PC-9 (cell line): ENCODE measurements at regions of chr11 and their contacts with region 1.

Region 1: GRCh38 chr11:57741132-57742086 is at the start of gene SELENOH:
- DNase-seq: peak; percentile 92 to 99
- H3K4me3 ChIP-seq: peak within 1 kb of the TSS; percentile 67
- H3K27ac ChIP-seq: peak within 1 kb of the TSS; percentile 64
- H3K4me1 ChIP-seq: peaks cover 14% of the 10 kb centered on the region
- H3K27me3 ChIP-seq: no peaks in the 10 kb centered on the region
- CTCF ChIP-seq: no peak
- total RNA-seq, gene SELENOH: 211 and 318 TPM in 2 replicates

Region 2: DNA sequence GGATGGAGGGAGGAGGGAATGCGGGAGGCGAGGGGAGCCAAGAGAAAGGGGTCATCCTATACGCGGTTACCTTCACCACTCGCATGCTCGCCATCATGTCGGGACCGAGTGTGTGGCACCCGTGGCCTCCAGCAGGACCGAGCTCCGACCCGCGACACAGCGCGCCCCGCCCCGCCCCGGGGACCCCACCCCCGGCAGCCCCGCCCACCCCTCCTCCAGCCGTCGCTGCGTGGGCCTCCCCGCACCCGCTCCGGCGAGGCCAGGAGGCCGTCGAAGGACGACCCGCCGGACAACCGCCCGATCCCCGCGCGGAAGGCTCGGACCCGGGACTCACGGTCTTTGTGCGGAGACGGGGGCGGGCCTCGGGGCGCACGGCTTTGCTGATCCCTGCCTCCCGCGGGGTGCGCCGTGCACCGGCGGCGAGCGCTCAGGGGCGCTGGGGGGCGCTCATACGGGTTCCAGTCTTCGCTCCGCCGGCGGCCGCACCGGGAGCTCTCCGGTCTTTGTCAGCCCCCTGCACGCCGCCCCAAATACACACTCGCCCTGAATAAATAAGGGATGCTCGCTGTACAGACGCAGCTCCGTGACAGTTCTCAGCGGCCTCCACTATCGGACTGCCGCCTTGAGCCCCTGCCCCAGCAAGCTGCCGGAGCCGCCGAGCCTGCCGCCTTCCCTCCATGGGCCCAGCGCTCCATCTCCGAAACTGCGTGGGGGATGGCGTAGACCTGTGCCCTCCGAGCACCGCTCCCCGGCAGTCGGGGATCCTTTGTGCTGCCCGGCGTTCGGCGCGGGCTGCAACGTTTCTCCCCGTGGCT is 173.7 kb before region 1 on chr11 and contains the start of gene UBE2L6:
- CTCF ChIA-PET with region 1: no interaction called
- POLR2A ChIA-PET with region 1: no interaction called
- intact Hi-C with region 1: loop called (anchors 1 kb)
- DNase-seq: peak in 1 of 2 experiments; percentile 62
- H3K4me3 ChIP-seq: peak within 1 kb of the TSS; percentile 89
- H3K27ac ChIP-seq: no peak within 1 kb of the TSS
- H3K4me1 ChIP-seq: peaks cover 24% of the 10 kb centered on the region
- H3K27me3 ChIP-seq: no peaks in the 10 kb centered on the region
- CTCF ChIP-seq: no peak
- total RNA-seq, gene UBE2L6: 121 and 122 TPM in 2 replicates

Region 3: DNA sequence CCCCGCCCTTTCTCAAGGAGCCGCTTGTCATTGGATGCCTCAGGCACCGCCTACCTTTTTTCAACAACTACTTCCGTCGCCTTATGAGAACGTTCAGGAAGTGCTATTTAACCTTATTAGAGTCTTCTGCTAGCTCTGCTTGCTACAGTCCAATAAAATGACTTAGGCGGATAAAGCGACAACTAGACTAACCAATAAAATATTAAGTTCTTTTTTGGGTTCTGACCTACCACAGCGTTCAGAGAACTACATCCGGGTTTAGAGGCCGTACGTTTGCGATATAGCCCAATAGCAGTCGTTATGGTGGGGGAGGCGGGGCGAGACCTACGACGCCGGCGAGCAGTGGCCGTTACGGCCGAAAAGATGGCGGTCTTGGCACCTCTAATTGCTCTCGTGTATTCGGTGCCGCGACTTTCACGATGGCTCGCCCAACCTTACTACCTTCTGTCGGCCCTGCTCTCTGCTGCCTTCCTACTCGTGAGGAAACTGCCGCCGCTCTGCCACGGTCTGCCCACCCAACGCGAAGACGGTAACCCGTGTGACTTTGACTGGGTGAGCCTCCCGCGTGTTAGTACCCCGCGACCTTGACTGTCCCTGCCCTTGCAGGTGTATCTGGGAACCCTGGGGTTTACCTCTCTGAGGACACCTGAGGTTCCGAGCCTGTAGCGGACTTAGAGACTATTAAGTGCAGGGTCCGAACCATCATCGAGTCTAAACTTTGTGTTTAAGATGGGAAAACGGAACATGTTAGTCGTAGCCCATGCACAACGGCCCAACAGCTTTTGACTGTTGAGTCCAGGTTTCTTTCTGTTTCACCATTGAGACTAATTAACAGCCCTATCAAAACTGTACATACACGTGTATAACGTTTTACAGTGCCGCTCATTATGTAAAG is 28.9 kb before region 1 on chr11 and contains the start of gene TMX2:
- CTCF ChIA-PET with region 1: no interaction called
- POLR2A ChIA-PET with region 1: interaction called, 15 read pairs
- intact Hi-C with region 1: loop called (anchors 1 kb)
- DNase-seq: peak; percentile 94 to 100
- H3K4me3 ChIP-seq: peak within 1 kb of the TSS; percentile 97
- H3K27ac ChIP-seq: peak within 1 kb of the TSS; percentile 75
- H3K4me1 ChIP-seq: peaks cover 25% of the 10 kb centered on the region
- H3K27me3 ChIP-seq: no peaks in the 10 kb centered on the region
- CTCF ChIP-seq: no peak
- total RNA-seq, gene TMX2: 124 and 138 TPM in 2 replicates

Region 4: DNA sequence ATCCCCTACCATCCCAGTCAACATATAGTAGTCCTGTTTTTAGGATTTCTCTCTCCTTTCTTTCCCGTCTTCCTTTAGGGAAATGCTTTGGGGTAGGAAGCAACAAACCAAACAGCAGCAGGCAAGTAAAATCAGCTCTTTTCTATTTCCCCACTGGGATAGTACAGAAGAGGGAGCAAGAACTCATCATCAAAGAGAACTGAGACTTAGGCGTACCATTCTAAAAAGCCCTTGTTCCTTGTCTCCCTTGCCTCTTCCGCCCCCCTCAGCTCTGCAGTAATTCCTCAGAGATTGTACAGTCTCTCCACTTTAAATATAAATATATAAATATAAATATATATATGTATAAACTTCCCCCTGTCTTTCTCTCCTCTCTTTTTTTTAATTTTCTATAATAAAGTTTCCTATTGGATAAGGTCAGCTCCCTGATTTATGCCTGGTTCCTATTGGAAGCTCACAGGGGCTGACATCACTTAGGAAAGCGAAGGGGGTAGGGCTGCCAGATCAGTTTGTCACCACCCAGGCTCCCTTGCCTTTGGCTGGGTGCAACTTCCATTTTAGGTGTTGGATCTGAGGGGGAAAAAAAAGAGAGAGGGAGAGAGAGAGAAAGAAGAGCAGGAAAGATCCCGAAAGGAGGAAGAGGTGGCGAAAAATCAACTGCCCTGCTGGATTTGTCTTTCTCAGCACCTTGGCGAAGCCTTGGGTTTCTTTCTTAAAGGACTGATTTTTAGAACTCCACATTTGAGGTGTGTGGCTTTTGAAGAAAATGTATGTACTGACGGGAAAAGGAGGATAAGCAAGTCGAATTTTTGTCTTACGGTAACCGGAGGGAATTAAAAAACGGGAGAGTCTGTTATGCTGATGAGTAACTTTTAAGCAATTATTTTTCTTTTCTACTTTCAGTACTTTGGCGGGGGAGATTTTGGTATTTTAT is 20.2 kb after region 1 on chr11 and contains the start of gene CTNND1:
- CTCF ChIA-PET with region 1: no interaction called
- POLR2A ChIA-PET with region 1: interaction called, 21 read pairs
- intact Hi-C with region 1: loop called (anchors 2 kb)
- DNase-seq: peak; percentile 92 to 96
- H3K4me3 ChIP-seq: peak within 1 kb of the TSS; percentile 100
- H3K27ac ChIP-seq: peak within 1 kb of the TSS; percentile 98
- H3K4me1 ChIP-seq: peaks cover 30% of the 10 kb centered on the region
- H3K27me3 ChIP-seq: no peaks in the 10 kb centered on the region
- CTCF ChIP-seq: no peak
- total RNA-seq, gene CTNND1: 340 and 413 TPM in 2 replicates

Region 5: DNA sequence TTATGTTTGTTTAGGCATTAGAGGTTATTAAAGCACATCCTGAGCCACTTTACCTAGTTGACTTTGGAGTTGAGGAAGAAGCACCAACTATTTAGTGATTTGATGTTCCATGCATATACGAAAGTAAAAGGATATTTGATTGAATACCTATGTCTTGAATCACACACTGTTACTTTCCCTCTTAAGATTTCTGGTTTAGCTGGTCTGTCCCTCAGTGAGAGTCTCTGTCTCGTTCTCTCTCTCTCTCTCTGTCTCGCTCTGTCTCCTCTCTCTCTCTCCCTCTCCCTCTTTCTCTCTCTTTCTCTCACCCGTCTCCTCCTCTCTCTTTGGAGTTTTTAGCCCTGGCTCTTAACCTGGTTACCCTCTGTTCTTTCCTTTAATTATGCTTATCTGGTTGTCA is 31.2 kb after region 1 on chr11:
- CTCF ChIA-PET with region 1: no interaction called
- POLR2A ChIA-PET with region 1: interaction called, 18 read pairs
- intact Hi-C with region 1: no loop called
- DNase-seq: peak in 1 of 2 experiments; percentile 92
- H3K4me3 ChIP-seq: peak overlapping the region; percentile 40; the same call in 1 of the 2 replicates
- H3K27ac ChIP-seq: peak overlapping the region; percentile 86
- H3K4me1 ChIP-seq: peaks cover 89% of the 10 kb centered on the region
- H3K27me3 ChIP-seq: no peaks in the 10 kb centered on the region
- CTCF ChIP-seq: no peak

Region 6: DNA sequence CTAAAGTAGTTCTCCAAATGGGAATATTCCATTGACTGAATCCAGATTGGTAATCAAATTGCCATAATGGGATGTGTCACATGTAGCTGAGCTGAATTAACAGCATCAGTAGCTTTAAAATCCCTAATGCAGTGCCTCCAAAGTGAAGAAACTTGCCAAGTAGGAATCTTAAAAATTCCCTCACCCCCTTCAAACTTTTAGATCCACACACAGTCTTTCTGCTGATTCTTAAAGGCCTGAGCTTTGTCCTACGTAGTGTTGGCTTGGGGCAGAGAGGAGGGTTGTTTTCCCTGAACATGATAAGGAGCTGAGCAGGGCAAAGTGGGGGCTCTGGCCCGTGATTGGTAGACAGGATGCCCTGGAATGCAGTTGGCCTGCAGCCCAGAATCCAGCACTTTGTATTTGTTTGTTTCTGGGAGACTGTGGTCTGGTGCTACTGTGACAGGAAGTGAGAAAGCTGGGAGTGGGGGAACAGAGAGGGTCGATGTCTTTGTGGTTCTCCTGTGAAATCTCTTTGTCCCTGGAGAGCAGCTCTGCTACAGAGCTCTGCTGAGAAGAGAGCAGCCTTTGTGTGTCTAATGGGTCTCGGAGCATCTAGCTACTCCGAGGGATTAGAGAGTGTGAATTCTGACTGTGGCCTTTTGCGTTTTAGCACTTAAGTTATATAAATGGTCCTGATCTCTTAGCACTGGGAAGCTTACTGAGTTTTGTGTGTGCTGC is 37.1 kb after region 1 on chr11:
- CTCF ChIA-PET with region 1: no interaction called
- POLR2A ChIA-PET with region 1: interaction called, 18 read pairs
- intact Hi-C with region 1: loop called (anchors 1 kb)
- DNase-seq: peak; percentile 98 to 99
- H3K4me3 ChIP-seq: peak overlapping the region; percentile 50; the same call in 1 of the 2 replicates
- H3K27ac ChIP-seq: peak overlapping the region; percentile 93
- H3K4me1 ChIP-seq: peaks cover 93% of the 10 kb centered on the region
- H3K27me3 ChIP-seq: no peaks in the 10 kb centered on the region
- CTCF ChIP-seq: no peak